ENCODE measurements at regions of chr22 and their contacts with region 1.

Region 1: DNA sequence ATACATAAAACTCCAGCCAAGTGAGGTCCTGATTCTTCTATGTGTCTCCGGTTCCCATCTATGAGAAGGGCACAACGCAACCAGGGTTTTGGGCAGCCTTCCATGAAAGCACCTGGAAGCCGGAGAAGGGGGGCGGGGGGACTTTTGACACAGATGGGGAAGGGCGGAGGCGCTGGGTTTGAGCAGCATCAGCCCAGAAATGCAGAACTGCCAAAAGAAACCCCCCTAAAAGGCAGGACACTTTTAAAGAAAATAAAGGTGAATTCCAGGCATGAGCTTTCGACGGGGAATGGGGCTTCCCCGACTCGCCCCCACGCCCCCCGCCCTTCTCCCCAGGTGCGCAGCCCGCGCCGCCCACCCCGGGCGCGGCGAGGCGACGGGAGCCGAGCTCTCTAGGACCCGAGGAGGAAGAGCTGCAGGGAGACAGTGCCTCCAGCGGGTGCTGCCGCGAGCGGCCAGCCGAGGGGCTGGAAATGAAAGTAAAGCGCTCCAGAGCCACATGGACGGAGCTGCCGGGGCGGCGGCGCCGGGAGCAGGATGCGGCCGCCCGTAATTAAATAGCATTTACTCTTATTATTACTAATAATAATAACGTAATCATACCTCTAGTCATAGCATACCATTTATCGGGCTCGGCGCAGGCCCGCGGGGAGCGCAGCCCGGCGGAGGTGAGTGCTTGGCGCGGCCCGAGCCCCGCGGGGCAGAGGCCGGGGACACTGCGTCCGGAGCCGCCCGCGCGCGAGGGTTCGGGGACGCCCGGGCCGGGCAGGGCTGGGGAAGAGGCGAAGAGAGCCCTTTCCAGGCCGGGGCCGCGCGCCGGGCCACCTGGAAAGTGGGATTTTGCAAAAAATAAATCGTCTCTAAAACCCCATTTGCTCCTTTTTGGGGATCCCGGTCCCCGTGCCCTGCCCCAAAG is at the start of gene ZC3H7B:
- DNase-seq: peak; percentile 74
- ATAC-seq: peak; percentile 89
- H3K4me3 ChIP-seq: peak within 1 kb of the TSS; percentile 75
- H3K27ac ChIP-seq: peak within 1 kb of the TSS; percentile 92
- H3K4me1 ChIP-seq: peaks cover 13% of the 10 kb centered on the region
- H3K27me3 ChIP-seq: no peaks in the 10 kb centered on the region
- CTCF ChIP-seq: peak; percentile 60
- POLR2A ChIP-seq: peak; percentile 76
- RAD21 ChIP-seq: peak; percentile 64
- total RNA-seq, gene ZC3H7B: 35.6 and 37.6 TPM in 2 replicates

Region 2: GRCh38 chr22:41234815-41235687 is 66.3 kb before region 1 on chr22:
- CTCF ChIA-PET with region 1: no interaction called
- POLR2A ChIA-PET with region 1: no interaction called
- dilution Hi-C with region 1: no loop called
- in situ Hi-C with region 1: no loop called
- intact Hi-C with region 1: loop called (anchors 2 kb)
- DNase-seq: no peak
- ATAC-seq: no peak
- H3K4me3 ChIP-seq: no peak overlapping the region
- H3K27ac ChIP-seq: no peak overlapping the region
- H3K4me1 ChIP-seq: 0 out of 2 replicates have a peak, but pooled peaks cover 4% of the 10 kb centered on the region
- H3K27me3 ChIP-seq: no peaks in the 10 kb centered on the region
- CTCF ChIP-seq: no peak
- POLR2A ChIP-seq: no peak
- RAD21 ChIP-seq: no peak

Region 3: GRCh38 chr22:41256254-41256897 is 45.0 kb before region 1 on chr22:
- CTCF ChIA-PET with region 1: no interaction called
- POLR2A ChIA-PET with region 1: no interaction called
- dilution Hi-C with region 1: no loop called
- in situ Hi-C with region 1: no loop called
- intact Hi-C with region 1: loop called (anchors 1 kb)
- DNase-seq: peak; percentile 80
- ATAC-seq: peak; percentile 77
- H3K4me3 ChIP-seq: no peak overlapping the region
- H3K27ac ChIP-seq: peak overlapping the region; percentile 6; the same call in 1 of the 2 replicates
- H3K4me1 ChIP-seq: peaks cover 14% of the 10 kb centered on the region
- H3K27me3 ChIP-seq: no peaks in the 10 kb centered on the region
- CTCF ChIP-seq: peak; percentile 31
- POLR2A ChIP-seq: no peak
- RAD21 ChIP-seq: peak; percentile 20; the same call in 1 of the 2 replicates

Region 4: DNA sequence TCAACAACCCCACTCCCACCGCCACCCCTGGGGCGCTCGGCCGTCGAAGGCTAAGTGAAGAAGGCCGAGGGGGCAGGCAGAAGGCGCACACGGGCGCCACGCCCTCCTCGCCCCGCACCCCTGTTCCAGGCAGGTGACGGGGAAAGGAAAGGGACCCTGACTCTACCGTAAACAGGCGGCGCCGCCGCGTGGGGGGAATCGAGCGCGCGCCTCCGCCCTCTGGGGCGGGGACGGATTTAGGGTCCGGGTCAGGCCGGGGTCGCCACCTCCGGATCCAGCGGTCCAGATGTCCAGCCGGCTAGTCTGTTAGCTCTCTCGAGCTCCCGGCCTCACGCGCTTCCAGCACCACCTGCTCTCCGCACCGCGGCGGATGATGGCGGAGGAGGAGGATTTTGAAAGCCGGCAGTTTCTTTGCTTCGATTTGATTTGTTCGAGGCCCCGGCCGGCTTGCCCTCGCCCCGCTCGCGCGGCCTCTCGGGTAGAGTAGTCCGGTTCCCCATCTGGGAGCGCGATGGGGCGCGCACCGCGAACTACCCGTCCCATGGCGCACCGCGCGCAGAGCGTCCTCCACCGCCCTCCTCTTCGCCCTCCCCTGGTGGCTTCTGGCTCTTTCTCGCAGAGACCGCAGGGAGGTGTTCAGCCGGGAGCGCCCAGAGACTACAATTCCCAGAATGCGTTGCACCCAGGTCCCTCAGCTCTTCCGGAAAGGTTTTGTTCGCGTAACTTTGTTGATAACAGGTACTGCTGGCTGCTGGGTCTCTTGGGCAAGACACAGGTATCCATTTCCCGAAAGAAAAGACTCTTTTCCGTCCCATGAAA is 15.3 kb before region 1 on chr22 and contains the start of gene RANGAP1:
- CTCF ChIA-PET with region 1: no interaction called
- POLR2A ChIA-PET with region 1: no interaction called
- dilution Hi-C with region 1: no loop called
- in situ Hi-C with region 1: no loop called
- intact Hi-C with region 1: loop called (anchors 2 kb)
- DNase-seq: peak; percentile 98
- ATAC-seq: peak; percentile 87
- H3K4me3 ChIP-seq: peak within 1 kb of the TSS; percentile 55
- H3K27ac ChIP-seq: peak within 1 kb of the TSS; percentile 81
- H3K4me1 ChIP-seq: peaks cover 24% of the 10 kb centered on the region
- H3K27me3 ChIP-seq: no peaks in the 10 kb centered on the region
- CTCF ChIP-seq: peak; percentile 25; the same call in 1 of the 2 replicates
- POLR2A ChIP-seq: peak; percentile 95
- RAD21 ChIP-seq: no peak
- total RNA-seq, gene RANGAP1: 71.2 and 74.4 TPM in 2 replicates

Measured in IMR-90 (cell line).